Gastrocnemius medialis (tissue), 4 donors: ENCODE measurements at regions of chr15 and their contacts with region 1.

Region 1: DNA sequence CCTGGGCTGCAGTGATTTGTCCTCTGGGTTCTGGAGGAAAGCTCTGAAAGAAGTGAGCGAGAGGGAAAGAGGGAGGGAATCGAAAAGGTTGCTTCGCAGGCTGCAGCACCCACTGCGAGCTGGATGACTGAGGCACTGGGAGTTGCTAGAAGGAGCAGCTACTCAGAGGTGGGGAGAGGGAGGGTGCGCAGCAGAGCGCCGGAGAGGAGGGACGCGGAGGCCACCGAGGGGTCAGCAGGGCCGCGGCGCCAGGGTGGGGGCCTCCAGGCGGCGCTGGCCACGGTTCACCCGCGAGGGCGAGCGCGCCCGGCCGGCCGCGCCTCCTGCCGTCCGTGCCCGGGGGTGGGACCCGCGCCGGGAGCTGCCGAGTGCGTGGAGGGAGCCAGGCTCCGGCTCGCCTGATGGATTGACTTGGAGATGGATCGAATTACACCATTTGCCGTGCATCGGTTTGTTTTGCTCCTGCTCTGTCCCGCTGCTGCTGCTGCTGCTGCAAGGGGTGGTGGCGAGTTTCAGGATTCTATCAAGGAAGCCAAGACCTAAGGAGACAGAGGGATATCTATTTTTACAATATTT is at the start of gene SEMA6D:
- DNase-seq: peak; percentile 79 to 80
- ATAC-seq: peak; percentile 69 to 77
- H3K4me3 ChIP-seq: peak within 1 kb of the TSS; percentile 77 to 89 (median 85)
- H3K27ac ChIP-seq: peak within 1 kb of the TSS; percentile 88 to 96 (median 94)
- H3K4me1 ChIP-seq: peaks cover 32% of the 10 kb centered on the region in 2 donors
- H3K27me3 ChIP-seq: no peaks in the 10 kb centered on the region
- CTCF ChIP-seq: peak in 4 of 5 experiments; percentile 39 to 66 (median 52)
- POLR2A ChIP-seq: peak; percentile 12 to 29
- total RNA-seq, gene SEMA6D: 0.97 to 5.9 (median 2.7) TPM

Region 2: GRCh38 chr15:47750030-47750739 is 33.1 kb after region 1 on chr15:
- in situ Hi-C with region 1: no loop called
- intact Hi-C with region 1: loop called (anchors 2 kb)
- DNase-seq: peak in 1 of 2 donors; percentile 33
- ATAC-seq: peak; percentile 87 to 91
- H3K4me3 ChIP-seq: no peak overlapping the region
- H3K27ac ChIP-seq: peak overlapping the region; percentile 40 to 69 (median 48)
- H3K4me1 ChIP-seq: peaks cover 37 to 50% of the 10 kb centered on the region in 2 donors
- H3K27me3 ChIP-seq: no peaks in the 10 kb centered on the region
- CTCF ChIP-seq: no peak
- POLR2A ChIP-seq: no peak

Region 3: DNA sequence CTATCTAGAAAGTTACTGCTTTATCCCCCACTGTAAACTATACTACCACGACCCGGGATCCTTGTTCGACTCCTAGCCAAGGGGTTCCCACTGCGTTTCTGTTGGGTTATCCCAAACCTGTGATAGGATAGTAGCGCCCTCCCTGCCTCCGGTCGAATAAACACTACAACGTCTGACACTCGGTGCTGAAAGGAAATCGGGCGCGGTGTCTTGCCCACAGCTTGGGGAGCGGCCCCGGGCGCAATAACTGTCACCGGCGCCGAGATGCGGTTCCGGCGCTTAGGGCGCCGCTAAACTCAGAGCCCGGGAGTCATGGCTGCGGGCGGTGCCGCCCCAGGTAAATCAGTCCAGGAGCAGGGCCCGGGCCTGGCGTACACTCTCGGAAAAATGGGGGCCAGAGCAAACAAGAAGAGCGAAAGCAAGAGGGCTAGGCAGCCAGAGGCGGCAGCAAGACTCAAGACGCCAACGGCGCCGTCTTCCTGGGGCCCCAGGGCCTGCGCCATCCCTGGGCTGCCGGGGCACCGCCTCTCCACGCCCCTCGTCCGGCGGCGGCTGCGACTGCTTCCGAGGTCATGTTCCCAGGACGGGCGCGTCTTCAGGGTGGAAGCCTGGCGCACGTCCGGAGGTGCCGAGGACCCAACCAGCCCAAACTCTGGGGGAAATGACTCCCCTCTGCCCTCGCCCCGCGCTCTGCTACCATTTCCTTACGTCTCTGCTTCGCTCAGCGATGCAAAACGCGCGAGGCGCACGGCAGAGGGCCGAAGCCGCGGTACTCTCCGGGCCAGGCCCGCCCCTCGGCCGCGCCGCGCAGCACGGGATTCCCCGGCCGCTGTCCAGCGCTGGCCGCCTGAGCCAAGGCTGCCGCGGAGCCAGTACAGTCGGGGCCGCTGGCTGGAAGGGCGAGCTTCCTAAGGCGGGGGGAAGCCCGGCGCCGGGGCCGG is 614.0 kb after region 1 on chr15 and contains the start of gene DUT:
- in situ Hi-C with region 1: no loop called
- intact Hi-C with region 1: loop called (anchors 10 kb)
- DNase-seq: peak; percentile 73 to 75
- ATAC-seq: peak; percentile 92 to 96
- H3K4me3 ChIP-seq: peak within 1 kb of the TSS; percentile 67 to 94 (median 86)
- H3K27ac ChIP-seq: peak within 1 kb of the TSS; percentile 90 to 95 (median 92)
- H3K4me1 ChIP-seq: peaks cover 16 to 17% of the 10 kb centered on the region in 2 donors
- H3K27me3 ChIP-seq: no peaks in the 10 kb centered on the region
- CTCF ChIP-seq: peak in 1 of 5 experiments; percentile 17
- POLR2A ChIP-seq: peak; percentile 81 to 84
- total RNA-seq, gene DUT: 40.0 to 73.0 (median 45.0) TPM